Activated naive CD4-positive, alpha-beta T cell treated with anti-CD3 and anti-CD28 coated beads, Interleukin-2, amount 10 ng/mL, durations not matched to agents 7 days and 5 days (primary cell): ENCODE measurements at regions of chr4 and their contacts with region 1.

Region 1: DNA sequence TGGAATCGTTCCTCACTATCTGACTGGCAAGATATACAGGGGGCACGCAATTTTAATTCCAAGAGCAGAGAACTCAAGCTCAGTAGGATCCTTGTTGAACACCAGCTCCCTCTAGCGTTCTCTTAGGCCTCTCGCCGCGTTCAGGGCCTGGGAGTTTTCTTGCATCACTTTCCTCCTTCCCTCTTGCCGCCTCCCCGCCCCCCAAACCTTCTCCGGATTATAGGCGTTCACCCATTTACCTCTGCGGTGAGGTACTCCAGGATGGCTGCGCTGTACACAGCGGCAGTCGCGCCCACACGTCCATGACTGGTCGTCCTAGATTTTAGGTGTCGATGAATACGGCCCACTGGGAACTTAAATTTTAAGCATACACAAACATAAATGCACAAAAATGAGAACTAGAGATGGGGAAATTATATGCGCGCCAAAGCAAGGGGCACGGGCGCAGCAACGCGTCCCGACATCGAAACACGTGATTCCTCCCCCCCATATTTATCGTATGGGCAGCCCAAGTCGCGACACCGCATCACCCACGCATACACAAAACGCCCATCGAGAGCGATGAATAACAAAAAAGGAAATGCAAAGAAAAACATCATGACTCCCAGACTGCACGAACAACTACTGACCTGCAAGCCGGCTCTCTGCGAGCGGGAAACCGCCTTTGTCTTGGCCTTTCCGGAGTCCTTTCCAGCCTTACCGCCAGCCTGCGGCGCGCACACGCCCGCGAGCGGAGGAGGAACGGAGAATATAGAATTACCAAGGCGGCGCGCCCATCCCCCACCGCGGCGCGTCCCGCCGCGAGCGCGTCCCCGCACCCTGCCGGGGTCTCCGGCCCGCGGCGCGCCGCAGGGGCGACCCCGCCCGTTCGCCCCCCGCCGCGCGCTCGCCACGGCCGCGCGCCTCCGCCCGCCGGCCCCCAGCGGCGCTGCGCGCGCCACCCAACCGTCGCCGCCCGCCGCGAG is 759 bp downstream of the H2AZ1 start:
- DNase-seq: peak; percentile 94
- H3K4me3 Mint-ChIP-seq: no peak overlapping the region
- H3K27ac Mint-ChIP-seq: no peak overlapping the region
- H3K4me1 Mint-ChIP-seq: peaks cover 38% of the 10 kb centered on the region
- H3K27me3 Mint-ChIP-seq: no peaks in the 10 kb centered on the region

Region 2: DNA sequence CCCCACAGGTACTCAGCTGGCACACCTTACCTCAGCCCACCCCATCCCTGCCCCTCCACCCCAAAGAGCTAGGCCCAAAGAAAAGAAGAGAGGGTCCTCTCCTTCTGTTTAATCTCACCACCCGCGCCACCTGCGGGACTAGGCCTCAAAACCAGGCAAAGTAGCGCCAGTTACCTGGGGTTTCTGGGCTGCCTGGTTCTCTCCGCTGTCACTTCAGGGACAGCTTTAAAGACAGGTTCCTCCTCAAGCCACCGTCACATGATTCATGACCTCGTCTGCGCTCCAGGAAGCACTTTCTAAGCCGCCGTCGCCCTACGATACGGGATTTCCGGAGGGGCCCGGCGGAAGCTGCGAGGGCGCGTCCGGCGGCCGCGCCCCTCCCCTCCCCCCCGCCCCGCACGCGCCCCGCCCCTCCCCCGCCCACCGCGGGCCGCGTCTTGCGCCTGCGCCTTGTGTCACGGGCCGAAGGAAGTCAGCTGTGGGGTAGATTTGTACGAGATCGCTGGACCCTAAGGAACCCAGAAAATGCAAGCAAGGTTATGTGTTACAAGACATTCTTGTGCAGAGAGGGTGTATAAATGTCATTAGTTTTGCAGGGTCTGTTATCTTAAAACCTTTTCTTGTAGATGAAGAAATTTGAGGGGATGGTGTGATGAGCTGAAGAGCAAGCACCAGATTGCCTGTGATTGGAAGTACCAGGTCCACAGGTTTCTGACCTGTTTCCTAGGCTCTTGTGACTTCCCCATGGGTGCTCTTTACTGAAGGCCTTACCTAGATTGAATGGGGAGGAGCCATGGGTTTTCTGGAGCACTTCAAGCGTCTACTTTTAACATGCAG is 54.9 kb before region 1 on chr4 and contains the start of gene LAMTOR3:
- CTCF ChIA-PET with region 1: interaction called, 12 read pairs
- DNase-seq: peak; percentile 93
- H3K4me3 Mint-ChIP-seq: peak within 1 kb of the TSS; percentile 93
- H3K27ac Mint-ChIP-seq: peak within 1 kb of the TSS; percentile 95
- H3K4me1 Mint-ChIP-seq: peaks cover 44% of the 10 kb centered on the region
- H3K27me3 Mint-ChIP-seq: no peaks in the 10 kb centered on the region

Region 3: DNA sequence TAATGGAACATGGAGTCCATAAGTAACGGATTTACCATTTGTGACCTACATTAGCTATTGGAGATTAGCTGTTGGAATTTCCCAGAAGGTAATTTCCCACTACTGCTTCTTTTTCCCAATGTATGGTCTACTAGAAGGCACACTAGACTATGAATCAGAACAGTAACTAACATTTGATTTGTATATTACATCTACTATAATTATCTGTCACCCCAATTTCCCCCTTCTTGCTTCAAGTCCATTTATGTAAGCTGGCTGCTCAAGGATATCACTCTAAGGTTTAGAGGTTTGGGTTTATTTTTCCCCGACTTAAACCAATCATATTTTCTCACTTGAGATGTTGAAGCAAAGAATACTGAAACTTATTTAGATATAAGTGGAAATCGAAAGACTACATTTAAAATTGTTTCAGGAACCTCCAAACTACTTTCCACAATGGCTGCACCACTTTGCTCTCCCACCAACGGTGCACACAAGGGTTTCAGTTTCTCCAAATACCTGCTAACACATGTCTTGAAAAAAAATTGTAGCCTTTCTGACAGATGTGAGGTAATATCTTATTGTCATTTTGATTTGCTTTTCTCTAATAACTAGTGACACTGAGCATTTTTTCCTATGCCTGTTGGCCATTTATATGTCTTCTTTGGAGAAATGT is 34.1 kb after region 1 on chr4:
- CTCF ChIA-PET with region 1: no interaction called
- DNase-seq: no peak
- H3K4me3 Mint-ChIP-seq: no peak overlapping the region
- H3K27ac Mint-ChIP-seq: no peak overlapping the region
- H3K4me1 Mint-ChIP-seq: no peaks in the 10 kb centered on the region
- H3K27me3 Mint-ChIP-seq: peaks cover 14% of the 10 kb centered on the region